ENCODE measurements at regions of chr2 and their contacts with region 1.

Region 1: DNA sequence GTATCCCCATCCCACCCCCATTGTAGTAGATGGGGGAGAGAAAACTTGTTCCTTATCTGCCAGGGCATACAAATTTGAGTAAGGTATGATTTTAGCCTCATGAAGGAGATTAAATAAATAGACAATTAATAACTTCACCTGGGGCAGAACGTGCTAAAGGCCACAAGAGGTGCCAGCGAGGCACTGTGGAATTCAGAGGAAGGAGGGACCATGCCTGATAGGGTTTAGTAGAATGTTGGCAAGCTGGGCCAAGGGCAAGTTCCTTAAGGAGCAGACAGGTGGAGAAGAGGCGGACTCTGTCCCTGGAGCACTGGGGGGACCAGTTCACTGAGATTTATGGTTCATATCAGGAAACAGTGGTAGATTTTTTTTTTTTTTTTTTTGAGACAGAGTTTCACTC is 22.5 kb downstream of the STAMBP start:
- DNase-seq: no peak
- H3K4me3 ChIP-seq: no peak overlapping the region
- H3K27ac ChIP-seq: no peak overlapping the region
- H3K4me1 ChIP-seq: peaks cover 21% of the 10 kb centered on the region
- H3K27me3 ChIP-seq: no peaks in the 10 kb centered on the region
- CTCF ChIP-seq: peak; percentile 52 to 62

Region 2: GRCh38 chr2:72951303-72952095 is 899.8 kb before region 1 on chr2:
- CTCF ChIA-PET with region 1: no interaction called
- dilution Hi-C with region 1: no loop called
- in situ Hi-C with region 1: no loop called
- intact Hi-C with region 1: no loop called
- DNase-seq: no peak
- H3K4me3 ChIP-seq: no peak overlapping the region
- H3K27ac ChIP-seq: no peak overlapping the region
- H3K4me1 ChIP-seq: peaks cover 6% of the 10 kb centered on the region
- H3K27me3 ChIP-seq: no peaks in the 10 kb centered on the region
- CTCF ChIP-seq: no peak

Region 3: GRCh38 chr2:73821227-73821626 is 30.0 kb before region 1 on chr2:
- CTCF ChIA-PET with region 1: interaction called, 14 read pairs
- dilution Hi-C with region 1: no loop called
- in situ Hi-C with region 1: no loop called
- intact Hi-C with region 1: no loop called
- DNase-seq: no peak
- H3K4me3 ChIP-seq: no peak overlapping the region
- H3K27ac ChIP-seq: no peak overlapping the region
- H3K4me1 ChIP-seq: no peaks in the 10 kb centered on the region
- H3K27me3 ChIP-seq: no peaks in the 10 kb centered on the region
- CTCF ChIP-seq: no peak

Measured in mammary epithelial cell (primary cell).